ENCODE measurements at regions of chr11 and their contacts with region 1.

Region 1: GRCh38 chr11:128522055-128522942 is 65.1 kb downstream of the ETS1 start:
- DNase-seq: peak; percentile 99
- ATAC-seq: peak; percentile 80
- H3K4me3 ChIP-seq: peak overlapping the region; percentile 77
- H3K27ac ChIP-seq: peak overlapping the region; percentile 90
- H3K4me1 ChIP-seq: peaks cover 68% of the 10 kb centered on the region
- H3K27me3 ChIP-seq: no peaks in the 10 kb centered on the region
- CTCF ChIP-seq: no peak

Region 2: GRCh38 chr11:128172046-128172878 is 350.0 kb before region 1 on chr11:
- CTCF ChIA-PET with region 1: interaction called, 4 read pairs
- POLR2A ChIA-PET with region 1: no interaction called
- intact Hi-C with region 1: loop called (anchors 2 kb)
- DNase-seq: peak; percentile 95
- ATAC-seq: peak; percentile 89
- H3K4me3 ChIP-seq: no peak overlapping the region
- H3K27ac ChIP-seq: no peak overlapping the region
- H3K4me1 ChIP-seq: peaks cover 20% of the 10 kb centered on the region
- H3K27me3 ChIP-seq: no peaks in the 10 kb centered on the region
- CTCF ChIP-seq: peak; percentile 96

Region 3: DNA sequence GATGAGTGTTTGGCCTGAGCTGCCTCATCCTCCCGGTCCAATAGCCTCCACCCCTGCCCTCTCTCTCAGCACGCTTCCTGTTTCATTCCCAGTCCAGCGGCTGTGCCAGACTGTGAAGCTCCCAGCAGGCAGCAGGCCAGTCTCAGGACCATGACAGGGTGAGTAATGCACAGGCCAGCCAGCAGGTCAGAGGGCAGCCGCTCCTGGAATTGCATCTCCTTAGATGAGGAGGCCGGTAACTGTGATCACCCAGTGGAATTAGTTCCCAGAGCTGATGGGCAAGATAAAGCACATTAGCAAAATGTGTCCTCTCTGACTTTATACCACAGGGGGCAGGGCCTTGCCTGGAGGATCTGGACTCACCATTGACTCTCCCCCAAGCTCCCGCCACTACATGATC is 186.1 kb before region 1 on chr11:
- CTCF ChIA-PET with region 1: no interaction called
- POLR2A ChIA-PET with region 1: interaction called, 7 read pairs
- intact Hi-C with region 1: loop called (anchors 1 kb)
- DNase-seq: peak; percentile 98
- ATAC-seq: peak; percentile 52
- H3K4me3 ChIP-seq: no peak overlapping the region
- H3K27ac ChIP-seq: peak overlapping the region; percentile 96
- H3K4me1 ChIP-seq: peaks cover 51% of the 10 kb centered on the region
- H3K27me3 ChIP-seq: no peaks in the 10 kb centered on the region
- CTCF ChIP-seq: no peak

Region 4: DNA sequence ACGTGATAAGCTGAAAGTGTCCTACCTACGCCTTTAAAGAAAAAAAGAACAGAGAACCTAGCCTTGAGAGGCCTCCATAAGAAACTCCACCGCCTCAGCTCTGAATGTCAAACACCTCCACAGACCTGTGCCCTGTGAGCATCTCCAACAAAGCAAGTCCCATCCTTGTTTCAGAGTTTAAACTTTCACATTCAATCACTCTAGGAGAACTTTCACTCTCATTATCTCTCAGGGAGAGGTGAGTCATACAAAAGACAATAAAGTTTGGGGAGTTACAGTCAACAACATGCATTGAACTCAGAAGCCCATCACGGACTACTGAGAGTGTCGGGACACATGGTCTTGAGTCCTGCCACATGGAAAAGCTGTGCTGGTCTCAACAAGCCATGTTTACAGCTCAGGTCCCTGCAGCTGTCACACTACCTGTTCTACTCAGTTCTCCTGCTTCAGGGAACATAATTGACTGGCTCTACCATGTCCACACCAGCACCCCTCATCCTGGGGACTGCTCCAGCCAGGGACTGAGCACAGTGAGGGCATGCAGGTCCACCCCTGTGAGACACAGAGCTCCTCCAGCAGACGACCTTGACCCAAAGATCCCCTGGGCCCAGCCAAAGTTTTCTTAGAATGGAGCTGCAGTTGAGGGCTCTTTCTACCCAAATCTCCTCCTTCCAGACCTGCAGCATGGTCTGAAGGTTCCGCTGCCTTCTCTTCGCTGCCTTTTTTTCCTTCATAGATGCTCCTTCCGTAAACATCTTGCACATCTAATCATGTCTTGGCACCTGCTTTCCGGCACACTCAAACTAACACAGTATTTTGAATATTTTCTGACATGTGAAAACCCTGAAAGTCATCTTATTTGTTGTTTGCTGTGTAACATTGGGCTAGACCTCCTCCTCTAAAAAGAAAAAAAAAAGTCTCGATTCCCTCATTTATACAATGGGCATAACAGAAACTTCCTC is 49.9 kb before region 1 on chr11:
- CTCF ChIA-PET with region 1: no interaction called
- POLR2A ChIA-PET with region 1: interaction called, 5 read pairs
- intact Hi-C with region 1: loop called (anchors 2 kb)
- DNase-seq: peak; percentile 77
- ATAC-seq: peak; percentile 66
- H3K4me3 ChIP-seq: no peak overlapping the region
- H3K27ac ChIP-seq: peak overlapping the region; percentile 42
- H3K4me1 ChIP-seq: peaks cover 35% of the 10 kb centered on the region
- H3K27me3 ChIP-seq: no peaks in the 10 kb centered on the region
- CTCF ChIP-seq: no peak

Region 5: GRCh38 chr11:128506999-128507611 is 15.2 kb before region 1 on chr11:
- CTCF ChIA-PET with region 1: no interaction called
- POLR2A ChIA-PET with region 1: interaction called, 8 read pairs
- intact Hi-C with region 1: loop called (anchors 1 kb)
- DNase-seq: peak; percentile 96
- ATAC-seq: peak; percentile 74
- H3K4me3 ChIP-seq: peak overlapping the region; percentile 54
- H3K27ac ChIP-seq: peak overlapping the region; percentile 85
- H3K4me1 ChIP-seq: peaks cover 87% of the 10 kb centered on the region
- H3K27me3 ChIP-seq: no peaks in the 10 kb centered on the region
- CTCF ChIP-seq: no peak

Region 6: DNA sequence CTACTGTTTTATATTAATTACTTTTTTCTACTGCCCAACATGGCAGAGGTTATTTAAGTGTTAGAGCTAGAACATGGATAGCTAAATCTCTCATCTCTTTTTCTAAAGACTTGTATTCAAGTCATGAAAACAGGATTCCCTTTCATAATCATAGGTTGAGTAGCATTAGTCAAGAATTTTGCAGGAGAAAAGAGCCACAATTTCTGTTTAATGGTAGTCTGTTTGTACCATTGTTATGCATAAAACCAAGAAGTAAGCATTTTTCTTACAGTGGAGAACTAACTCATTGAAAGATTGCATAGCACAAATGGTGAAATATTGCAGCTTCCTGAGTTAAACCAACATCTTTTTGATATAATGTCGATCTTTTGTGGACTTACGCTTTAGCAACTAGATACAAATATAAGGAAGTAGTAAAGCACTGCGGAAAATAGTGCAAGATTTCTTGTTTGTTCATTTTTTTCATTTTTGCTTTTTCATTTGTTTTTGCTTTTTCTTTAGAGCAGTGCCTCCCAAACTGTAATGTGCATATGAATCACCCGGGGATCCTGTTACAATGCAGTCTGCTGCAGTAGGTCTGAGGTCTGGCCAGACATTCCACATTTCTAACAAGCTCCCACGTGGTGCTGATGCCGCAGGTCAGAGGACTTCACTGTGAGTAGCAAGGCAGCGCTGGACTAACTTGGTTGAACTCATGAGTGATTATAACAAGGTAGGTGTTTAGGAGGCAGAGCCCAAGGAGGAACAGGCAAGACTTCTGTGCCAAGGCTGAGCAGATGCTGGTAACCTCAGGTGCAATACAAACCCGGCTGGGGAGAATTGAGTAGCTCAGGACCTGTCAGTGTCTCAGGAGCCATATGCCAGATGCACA is 60.4 kb after region 1 on chr11:
- CTCF ChIA-PET with region 1: no interaction called
- POLR2A ChIA-PET with region 1: no interaction called
- intact Hi-C with region 1: loop called (anchors 5 kb)
- DNase-seq: peak; percentile 97
- ATAC-seq: peak; percentile 100
- H3K4me3 ChIP-seq: peak overlapping the region; percentile 24
- H3K27ac ChIP-seq: peak overlapping the region; percentile 36
- H3K4me1 ChIP-seq: peaks cover 25% of the 10 kb centered on the region
- H3K27me3 ChIP-seq: no peaks in the 10 kb centered on the region
- CTCF ChIP-seq: no peak

Region 7: GRCh38 chr11:128669506-128670270 is 147.4 kb after region 1 on chr11:
- CTCF ChIA-PET with region 1: no interaction called
- POLR2A ChIA-PET with region 1: no interaction called
- intact Hi-C with region 1: no loop called
- DNase-seq: peak; percentile 61
- ATAC-seq: peak; percentile 72
- H3K4me3 ChIP-seq: no peak overlapping the region
- H3K27ac ChIP-seq: no peak overlapping the region
- H3K4me1 ChIP-seq: peaks cover 11% of the 10 kb centered on the region; the same call in 1 of the 2 replicates
- H3K27me3 ChIP-seq: no peaks in the 10 kb centered on the region
- CTCF ChIP-seq: no peak

Region 8: GRCh38 chr11:129895126-129896041 is 1373.1 kb after region 1 on chr11 and contains the start of gene NFRKB:
- CTCF ChIA-PET with region 1: no interaction called
- POLR2A ChIA-PET with region 1: no interaction called
- intact Hi-C with region 1: no loop called
- DNase-seq: peak; percentile 85
- ATAC-seq: peak; percentile 94
- H3K4me3 ChIP-seq: peak within 1 kb of the TSS; percentile 92
- H3K27ac ChIP-seq: peak within 1 kb of the TSS; percentile 21; the same call in 1 of the 2 replicates
- H3K4me1 ChIP-seq: peaks cover 20% of the 10 kb centered on the region
- H3K27me3 ChIP-seq: no peaks in the 10 kb centered on the region
- CTCF ChIP-seq: no peak
- total RNA-seq, gene NFRKB: 48.2 and 57.0 TPM in 2 replicates